ENCODE measurements at regions of chr5 and their contacts with region 1.

Region 1: GRCh38 chr5:107135391-107135790 is 535.3 kb downstream of the EFNA5 start:
- DNase-seq: no peak
- ATAC-seq: no peak
- H3K4me3 ChIP-seq: no peak overlapping the region
- H3K27ac ChIP-seq: no peak overlapping the region
- H3K4me1 ChIP-seq: no peaks in the 10 kb centered on the region
- H3K27me3 ChIP-seq: no peaks in the 10 kb centered on the region
- CTCF ChIP-seq: no peak
- EP300 ChIP-seq: no peak
- POLR2A ChIP-seq: no peak
- RAD21 ChIP-seq: no peak

Region 2: GRCh38 chr5:106880656-106881055 is 254.7 kb before region 1 on chr5:
- CTCF ChIA-PET with region 1: no interaction called
- POLR2A ChIA-PET with region 1: no interaction called
- in situ Hi-C with region 1: no loop called
- intact Hi-C with region 1: loop called (anchors 5 kb)
- DNase-seq: no peak
- ATAC-seq: no peak
- H3K4me3 ChIP-seq: no peak overlapping the region
- H3K27ac ChIP-seq: no peak overlapping the region
- H3K4me1 ChIP-seq: no peaks in the 10 kb centered on the region
- H3K27me3 ChIP-seq: no peaks in the 10 kb centered on the region
- CTCF ChIP-seq: no peak
- EP300 ChIP-seq: no peak
- POLR2A ChIP-seq: no peak
- RAD21 ChIP-seq: no peak